Panc1 (cell line): ENCODE measurements at regions of chr3 and their contacts with region 1.

Region 1: DNA sequence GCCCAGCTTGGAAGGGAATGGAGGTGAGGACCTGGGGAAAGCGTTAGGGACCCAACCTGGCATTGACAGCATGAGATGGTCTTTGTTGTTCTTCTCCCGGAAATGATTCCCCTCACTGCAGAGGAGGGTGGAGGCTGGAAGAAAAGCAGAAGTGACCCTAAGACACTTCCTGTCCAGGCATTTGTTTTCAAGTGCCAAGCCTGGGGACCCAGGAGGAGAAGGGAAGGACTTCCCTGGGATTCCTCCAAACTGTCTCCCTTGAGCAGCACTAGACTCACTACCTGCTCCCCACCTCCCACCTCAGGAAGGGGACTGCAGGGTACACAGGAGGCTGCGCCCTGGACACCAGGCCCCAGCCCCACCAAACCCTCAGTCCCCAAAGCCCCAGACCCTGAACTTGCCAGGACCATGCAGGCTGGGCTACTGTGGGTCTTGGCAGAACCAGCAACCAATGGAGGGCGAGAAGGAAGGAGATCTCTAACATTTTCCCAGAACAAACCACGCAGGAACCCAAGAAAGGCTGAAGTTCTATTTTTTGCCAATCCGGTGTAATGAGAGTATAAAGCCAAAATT is 9.8 kb upstream of the VIPR1 start:
- DNase-seq: no peak
- ATAC-seq: no peak
- H3K4me3 ChIP-seq: no peak overlapping the region
- H3K27ac ChIP-seq: no peak overlapping the region
- H3K4me1 ChIP-seq: no peaks in the 10 kb centered on the region
- H3K27me3 ChIP-seq: no peaks in the 10 kb centered on the region
- CTCF ChIP-seq: no peak

Region 2: GRCh38 chr3:42367903-42368302 is 124.7 kb before region 1 on chr3:
- CTCF ChIA-PET with region 1: no interaction called
- POLR2A ChIA-PET with region 1: interaction called, 10 read pairs
- in situ Hi-C with region 1: no loop called
- intact Hi-C with region 1: no loop called
- DNase-seq: no peak
- ATAC-seq: no peak
- H3K4me3 ChIP-seq: no peak overlapping the region
- H3K27ac ChIP-seq: no peak overlapping the region
- H3K4me1 ChIP-seq: no peaks in the 10 kb centered on the region
- H3K27me3 ChIP-seq: no peaks in the 10 kb centered on the region
- CTCF ChIP-seq: no peak

Region 3: DNA sequence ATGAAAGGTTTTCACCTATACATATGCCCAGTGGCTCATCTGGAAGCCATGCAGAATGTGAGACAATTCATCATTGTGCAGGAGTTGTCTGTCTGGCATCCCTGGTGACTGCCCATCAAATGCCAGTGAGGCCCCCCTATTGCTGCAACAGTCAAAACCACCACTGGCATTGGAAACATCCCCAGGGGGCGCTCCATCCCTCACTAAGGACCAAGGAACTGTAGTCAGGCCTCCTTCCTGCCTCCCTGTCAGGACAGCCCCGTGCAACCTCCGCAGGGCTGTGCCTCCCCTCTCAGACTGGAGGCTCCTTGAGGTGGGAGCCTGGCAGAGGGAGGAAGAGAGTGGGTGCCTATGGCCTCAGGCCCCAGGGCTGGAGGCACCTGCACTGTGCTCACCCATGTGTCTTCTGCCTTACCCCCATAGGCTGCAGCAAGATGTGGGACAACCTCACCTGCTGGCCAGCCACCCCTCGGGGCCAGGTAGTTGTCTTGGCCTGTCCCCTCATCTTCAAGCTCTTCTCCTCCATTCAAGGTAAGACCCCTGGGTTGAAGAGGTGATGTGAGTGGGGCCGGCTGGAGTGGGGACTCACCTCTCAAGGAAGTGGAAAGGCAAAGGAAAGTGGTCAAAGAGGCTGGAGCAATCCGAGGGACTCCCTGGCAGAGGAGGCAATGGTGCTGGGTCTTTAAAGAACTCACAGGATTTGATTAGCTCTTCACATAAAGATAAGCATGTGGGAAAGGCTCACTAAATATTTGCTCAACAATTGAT is 26.4 kb after region 1 on chr3:
- CTCF ChIA-PET with region 1: no interaction called
- POLR2A ChIA-PET with region 1: no interaction called
- in situ Hi-C with region 1: no loop called
- intact Hi-C with region 1: no loop called
- DNase-seq: no peak
- ATAC-seq: no peak
- H3K4me3 ChIP-seq: no peak overlapping the region
- H3K27ac ChIP-seq: no peak overlapping the region
- H3K4me1 ChIP-seq: no peaks in the 10 kb centered on the region
- H3K27me3 ChIP-seq: no peaks in the 10 kb centered on the region
- CTCF ChIP-seq: no peak

Region 4: DNA sequence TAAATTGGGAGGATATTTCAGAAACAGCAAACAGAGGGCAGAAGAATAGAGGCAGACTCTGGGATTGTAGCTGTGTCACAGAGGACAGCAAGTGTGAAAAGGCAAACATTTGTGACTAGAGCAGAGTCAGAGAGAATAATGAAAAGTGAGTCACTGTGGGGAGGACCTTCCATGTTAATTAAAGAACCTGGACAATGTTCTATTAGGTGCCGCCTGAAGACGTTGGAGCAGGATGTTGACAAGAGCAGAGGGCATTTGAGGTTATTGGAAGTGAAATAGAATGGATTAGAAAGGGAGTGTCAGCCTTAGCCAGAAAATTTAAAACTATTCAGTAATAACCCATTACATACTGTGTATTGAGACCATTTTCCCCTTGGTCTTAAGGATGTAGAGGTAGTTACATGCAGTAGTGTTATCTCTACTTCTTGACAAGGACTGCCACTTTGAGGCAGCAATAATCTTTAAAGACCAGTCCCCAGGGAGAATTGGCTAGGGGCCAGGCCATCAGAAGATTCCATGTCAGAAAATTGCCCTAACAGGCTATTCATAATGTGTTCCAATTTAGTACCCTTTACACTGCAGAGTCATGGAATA is 322.4 kb after region 1 on chr3:
- CTCF ChIA-PET with region 1: no interaction called
- POLR2A ChIA-PET with region 1: no interaction called
- in situ Hi-C with region 1: no loop called
- intact Hi-C with region 1: no loop called
- DNase-seq: no peak
- ATAC-seq: no peak
- H3K4me3 ChIP-seq: no peak overlapping the region
- H3K27ac ChIP-seq: no peak overlapping the region
- H3K4me1 ChIP-seq: no peaks in the 10 kb centered on the region
- H3K27me3 ChIP-seq: no peaks in the 10 kb centered on the region
- CTCF ChIP-seq: no peak